Activated CD8-positive, alpha-beta T cell treated with anti-CD3 and anti-CD28 coated beads, Interleukin-2, amount 10 ng/mL, durations not matched to agents 7 days and 5 days (primary cell): ENCODE measurements at regions of chr10 and their contacts with region 1.

Region 1: GRCh38 chr10:114304017-114304570 is 65.0 kb downstream of the VWA2 start:
- DNase-seq: peak; percentile 85
- ATAC-seq: peak; percentile 59
- H3K4me3 Mint-ChIP-seq: peak overlapping the region; percentile 87
- H3K27ac Mint-ChIP-seq: peak overlapping the region; percentile 69
- H3K4me1 Mint-ChIP-seq: peaks cover 13% of the 10 kb centered on the region
- H3K27me3 Mint-ChIP-seq: no peaks in the 10 kb centered on the region

Region 2: GRCh38 chr10:114397651-114398145 is 93.6 kb after region 1 on chr10:
- CTCF ChIA-PET with region 1: interaction called, 21 read pairs
- POLR2A ChIA-PET with region 1: no interaction called
- DNase-seq: no peak
- ATAC-seq: peak; percentile 49
- H3K4me3 Mint-ChIP-seq: no peak overlapping the region
- H3K27ac Mint-ChIP-seq: no peak overlapping the region
- H3K4me1 Mint-ChIP-seq: peaks cover 14% of the 10 kb centered on the region
- H3K27me3 Mint-ChIP-seq: peaks cover 51% of the 10 kb centered on the region

Region 3: DNA sequence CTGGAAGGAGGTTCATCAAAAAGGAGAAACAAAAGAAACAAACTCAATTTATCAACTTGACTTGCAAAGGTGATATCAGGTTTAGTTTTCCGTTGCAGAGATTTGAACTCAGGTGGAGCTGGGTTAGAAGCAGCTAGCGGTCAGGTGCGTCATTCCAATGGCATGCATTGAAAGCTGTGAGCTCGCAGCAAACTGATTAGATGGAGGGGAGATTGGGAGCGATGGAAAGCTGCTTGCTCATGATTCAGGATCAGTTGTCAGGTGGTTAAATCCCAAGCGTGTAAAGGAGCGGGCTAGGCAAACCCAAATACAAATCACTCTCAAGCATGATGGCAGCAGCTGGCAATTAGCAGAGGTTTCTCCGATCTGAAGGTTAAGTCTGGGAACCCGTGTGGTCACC is 149.5 kb after region 1 on chr10:
- CTCF ChIA-PET with region 1: interaction called, 64 read pairs
- POLR2A ChIA-PET with region 1: interaction called, 5 read pairs
- DNase-seq: no peak
- ATAC-seq: no peak
- H3K4me3 Mint-ChIP-seq: no peak overlapping the region
- H3K27ac Mint-ChIP-seq: no peak overlapping the region
- H3K4me1 Mint-ChIP-seq: no peaks in the 10 kb centered on the region
- H3K27me3 Mint-ChIP-seq: no peaks in the 10 kb centered on the region

Region 4: DNA sequence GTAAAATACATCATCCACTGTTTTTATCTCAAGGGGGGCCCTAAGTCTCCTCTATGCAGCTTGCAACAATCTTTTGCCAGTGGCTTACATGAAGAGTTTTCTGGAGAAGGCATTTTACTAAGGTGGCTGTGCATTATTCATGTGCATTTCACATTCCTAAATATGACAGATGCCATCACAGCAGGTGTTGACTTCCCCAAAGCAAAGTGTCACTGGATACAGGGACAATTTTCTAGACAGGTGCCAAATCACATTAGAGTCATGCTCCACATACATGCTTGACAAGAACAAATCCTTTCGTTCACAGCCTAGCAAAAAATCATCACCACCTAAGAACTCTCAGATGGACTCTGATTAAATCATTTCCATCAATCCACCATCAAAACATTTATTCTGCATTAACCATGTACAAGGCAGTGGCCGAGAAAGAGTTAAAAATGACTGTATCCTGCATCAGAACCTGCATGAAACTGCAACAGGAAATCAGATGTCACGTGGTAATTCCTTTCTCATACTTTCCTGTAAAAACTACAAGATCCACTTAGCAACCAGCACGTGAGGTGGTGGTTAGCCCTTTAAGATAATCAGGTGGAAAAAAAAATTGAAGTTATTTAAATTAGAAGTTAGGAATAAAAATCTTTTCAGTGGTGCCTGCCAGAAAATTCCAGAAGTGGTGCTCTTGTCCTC is 188.4 kb after region 1 on chr10:
- CTCF ChIA-PET with region 1: interaction called, 16 read pairs
- POLR2A ChIA-PET with region 1: no interaction called
- DNase-seq: peak; percentile 66
- ATAC-seq: peak; percentile 59
- H3K4me3 Mint-ChIP-seq: peak overlapping the region; percentile 53
- H3K27ac Mint-ChIP-seq: peak overlapping the region; percentile 68
- H3K4me1 Mint-ChIP-seq: peaks cover 72% of the 10 kb centered on the region
- H3K27me3 Mint-ChIP-seq: no peaks in the 10 kb centered on the region

Region 5: DNA sequence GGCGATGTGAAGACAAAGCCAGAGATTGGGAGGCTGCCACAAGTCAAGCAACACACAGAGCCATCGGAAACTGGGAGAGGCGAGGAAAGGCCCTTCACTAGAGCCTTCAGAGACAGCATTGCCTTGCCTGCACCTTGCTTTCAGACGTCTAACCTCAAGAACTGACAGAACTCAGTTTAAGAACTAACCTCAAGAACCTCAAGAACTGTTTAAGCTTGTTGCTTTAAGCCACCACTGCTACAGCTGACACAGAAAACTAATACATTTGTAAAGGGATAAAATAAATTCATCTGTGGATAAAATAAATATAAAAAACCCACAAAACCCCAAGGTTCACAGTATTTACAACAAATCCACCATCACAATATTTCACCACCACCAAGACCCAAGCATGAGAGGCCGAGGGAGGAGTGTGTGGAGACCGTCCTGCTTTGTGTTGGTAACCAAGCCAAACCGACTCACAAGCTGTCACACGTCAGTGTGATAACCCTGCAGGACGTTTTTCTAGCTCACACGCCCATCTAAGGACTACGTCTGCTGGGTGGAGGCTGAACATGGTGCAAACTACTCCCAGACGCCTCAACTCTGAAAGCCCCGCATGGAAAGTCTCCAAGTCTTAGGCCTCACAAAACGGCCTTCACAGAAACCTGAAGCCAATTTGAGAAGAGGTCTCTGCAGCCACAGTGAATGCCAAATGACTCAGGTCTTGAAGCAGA is 237.1 kb after region 1 on chr10:
- CTCF ChIA-PET with region 1: interaction called, 74 read pairs
- POLR2A ChIA-PET with region 1: interaction called, 3 read pairs
- DNase-seq: peak; percentile 88
- ATAC-seq: peak; percentile 83
- H3K4me3 Mint-ChIP-seq: peak overlapping the region; percentile 60
- H3K27ac Mint-ChIP-seq: peak overlapping the region; percentile 98
- H3K4me1 Mint-ChIP-seq: peaks cover 89% of the 10 kb centered on the region
- H3K27me3 Mint-ChIP-seq: no peaks in the 10 kb centered on the region

Region 6: GRCh38 chr10:115129752-115130151 is 825.7 kb after region 1 on chr10:
- CTCF ChIA-PET with region 1: interaction called, 14 read pairs
- POLR2A ChIA-PET with region 1: no interaction called
- DNase-seq: no peak
- ATAC-seq: no peak
- H3K4me3 Mint-ChIP-seq: no peak overlapping the region
- H3K27ac Mint-ChIP-seq: no peak overlapping the region
- H3K4me1 Mint-ChIP-seq: no peaks in the 10 kb centered on the region
- H3K27me3 Mint-ChIP-seq: no peaks in the 10 kb centered on the region